Colonic mucosa (tissue), 4 donors: ENCODE measurements at regions of chr7 and their contacts with region 1.

Region 1: GRCh38 chr7:66493235-66494181 is 135.2 kb upstream of the KCTD7 start:
- DNase-seq: peak; percentile 98
- H3K4me3 ChIP-seq: peak overlapping the region; percentile 74
- H3K27ac ChIP-seq: peak overlapping the region; percentile 74
- H3K4me1 ChIP-seq: no peaks in the 10 kb centered on the region
- H3K27me3 ChIP-seq: no peaks in the 10 kb centered on the region
- CTCF ChIP-seq: no peak

Region 2: DNA sequence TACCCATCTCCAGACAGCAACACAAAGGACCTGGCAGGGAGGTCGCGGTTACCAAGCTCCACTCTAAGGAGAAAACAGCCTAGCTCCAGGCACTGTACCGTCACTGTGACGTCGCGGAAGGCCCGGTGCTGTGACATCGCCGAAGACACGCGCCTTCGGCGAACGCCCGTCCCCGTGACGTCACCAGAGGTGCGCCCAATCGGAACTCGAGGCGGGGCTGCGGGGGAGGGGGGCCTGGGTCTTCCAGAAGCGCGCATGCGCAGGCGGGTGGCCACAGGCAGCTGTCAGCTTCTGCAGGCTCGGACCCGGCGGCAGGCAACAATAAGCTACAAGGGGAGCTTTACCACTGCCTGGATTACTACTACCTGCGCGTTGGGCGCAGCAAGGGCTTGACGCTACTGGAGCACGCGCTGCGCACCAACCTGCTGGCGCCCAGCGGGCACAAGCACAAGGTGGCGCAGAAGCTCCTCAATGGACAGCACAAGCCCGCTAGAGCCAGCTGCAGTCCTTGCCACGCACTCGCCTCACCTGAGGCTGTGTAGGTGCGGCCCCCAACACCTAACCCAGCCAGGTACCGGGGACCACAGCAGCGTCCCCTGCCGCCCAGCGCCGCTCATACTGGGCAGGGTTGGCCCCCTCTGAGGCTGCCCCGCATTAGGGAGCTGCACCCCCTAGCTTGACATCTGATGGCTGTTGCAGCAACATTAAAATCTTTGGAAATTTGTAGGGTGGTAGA is 80.0 kb before region 1 on chr7:
- intact Hi-C with region 1: loop called (anchors 10 kb)
- DNase-seq: peak; percentile 85
- H3K4me3 ChIP-seq: peak overlapping the region; percentile 59
- H3K27ac ChIP-seq: peak overlapping the region; percentile 55
- H3K4me1 ChIP-seq: peaks cover 8% of the 10 kb centered on the region
- H3K27me3 ChIP-seq: no peaks in the 10 kb centered on the region
- CTCF ChIP-seq: peak; percentile 49